OCI-LY7 (cell line): ENCODE measurements at regions of chr20 and their contacts with region 1.

Region 1: GRCh38 chr20:24522452-24523330 is 53.3 kb downstream of the SYNDIG1 start:
- DNase-seq: no peak
- H3K4me3 ChIP-seq: no peak overlapping the region
- H3K27ac ChIP-seq: no peak overlapping the region
- H3K4me1 ChIP-seq: no peaks in the 10 kb centered on the region
- CTCF ChIP-seq: no peak

Region 2: GRCh38 chr20:23874747-23875146 is 647.9 kb before region 1 on chr20:
- CTCF ChIA-PET with region 1: no interaction called
- POLR2A ChIA-PET with region 1: no interaction called
- intact Hi-C with region 1: no loop called
- DNase-seq: peak; percentile 55
- H3K4me3 ChIP-seq: no peak overlapping the region
- H3K27ac ChIP-seq: no peak overlapping the region
- H3K4me1 ChIP-seq: peaks cover 11% of the 10 kb centered on the region
- CTCF ChIP-seq: no peak

Region 3: GRCh38 chr20:24501764-24502556 is 20.7 kb before region 1 on chr20:
- CTCF ChIA-PET with region 1: no interaction called
- POLR2A ChIA-PET with region 1: interaction called, 11 read pairs
- intact Hi-C with region 1: no loop called
- DNase-seq: no peak
- H3K4me3 ChIP-seq: no peak overlapping the region
- H3K27ac ChIP-seq: no peak overlapping the region
- H3K4me1 ChIP-seq: no peaks in the 10 kb centered on the region
- CTCF ChIP-seq: no peak